GM10248 (cell line): ENCODE measurements at regions of chr6 and their contacts with region 1.

Region 1: DNA sequence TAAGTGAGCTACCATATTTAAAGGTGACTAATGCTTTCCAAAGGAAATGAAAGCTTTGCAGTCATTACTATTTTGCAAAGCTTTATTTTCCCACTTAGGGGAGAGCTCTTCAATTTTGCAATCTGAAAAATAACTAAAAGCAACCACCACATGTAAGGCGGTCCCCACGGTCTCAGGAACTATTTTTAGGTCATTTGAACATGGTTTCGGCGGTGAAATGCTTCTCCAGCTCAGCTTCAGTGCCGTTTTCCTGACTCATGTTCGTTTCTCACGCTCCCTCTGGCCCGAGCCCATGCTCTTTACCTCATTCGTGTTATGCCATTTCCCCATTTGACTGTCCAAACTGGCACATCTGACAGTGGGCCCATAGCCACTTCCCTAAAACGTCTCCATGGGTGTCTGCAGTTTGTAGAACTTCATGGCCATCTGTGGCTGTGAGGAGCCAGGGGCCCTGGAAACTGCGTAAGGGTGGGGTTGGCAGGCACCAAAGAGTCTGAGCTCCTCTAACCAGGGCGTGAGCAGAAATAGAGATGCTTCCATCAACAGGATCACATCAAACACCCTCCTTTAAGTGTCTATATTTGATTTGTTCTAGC is 46.5 kb downstream of the ADTRP start:
- DNase-seq: peak; percentile 78
- CTCF ChIP-seq: no peak

Region 2: GRCh38 chr6:11711003-11711983 is 20.8 kb before region 1 on chr6:
- CTCF ChIA-PET with region 1: interaction called, 17 read pairs
- POLR2A ChIA-PET with region 1: interaction called, 24 read pairs
- DNase-seq: peak; percentile 60
- CTCF ChIP-seq: no peak

Region 3: GRCh38 chr6:11779329-11780096 is 47.4 kb after region 1 on chr6:
- CTCF ChIA-PET with region 1: interaction called, 11 read pairs
- POLR2A ChIA-PET with region 1: no interaction called
- DNase-seq: no peak
- CTCF ChIP-seq: no peak

Region 4: GRCh38 chr6:11833626-11834592 is 101.8 kb after region 1 on chr6:
- CTCF ChIA-PET with region 1: interaction called, 3 read pairs
- POLR2A ChIA-PET with region 1: interaction called, 11 read pairs
- DNase-seq: peak; percentile 60
- CTCF ChIP-seq: no peak

Region 5: DNA sequence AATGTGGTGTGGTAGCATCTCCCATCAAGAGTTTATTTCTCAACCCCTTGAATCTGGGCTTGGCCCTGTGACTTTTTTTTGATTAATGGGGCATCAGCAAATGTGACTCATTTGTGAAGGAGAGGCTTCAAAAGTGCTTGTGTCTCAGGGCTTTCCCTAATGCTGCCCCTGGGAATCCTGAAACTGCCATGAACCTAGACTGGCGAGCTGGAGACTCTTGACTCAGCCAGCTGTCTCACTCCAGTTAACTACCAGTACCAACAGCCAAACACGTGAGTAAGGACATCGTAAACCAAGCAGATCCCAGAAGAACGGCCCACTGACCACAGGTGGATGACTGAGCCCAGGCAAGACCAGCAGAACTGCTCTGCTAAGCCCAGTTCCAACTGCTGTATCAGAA is 119.3 kb after region 1 on chr6:
- CTCF ChIA-PET with region 1: no interaction called
- POLR2A ChIA-PET with region 1: no interaction called
- DNase-seq: no peak
- CTCF ChIP-seq: no peak